AG04449 (cell line): ENCODE measurements at regions of chr3 and their contacts with region 1.

Region 1: DNA sequence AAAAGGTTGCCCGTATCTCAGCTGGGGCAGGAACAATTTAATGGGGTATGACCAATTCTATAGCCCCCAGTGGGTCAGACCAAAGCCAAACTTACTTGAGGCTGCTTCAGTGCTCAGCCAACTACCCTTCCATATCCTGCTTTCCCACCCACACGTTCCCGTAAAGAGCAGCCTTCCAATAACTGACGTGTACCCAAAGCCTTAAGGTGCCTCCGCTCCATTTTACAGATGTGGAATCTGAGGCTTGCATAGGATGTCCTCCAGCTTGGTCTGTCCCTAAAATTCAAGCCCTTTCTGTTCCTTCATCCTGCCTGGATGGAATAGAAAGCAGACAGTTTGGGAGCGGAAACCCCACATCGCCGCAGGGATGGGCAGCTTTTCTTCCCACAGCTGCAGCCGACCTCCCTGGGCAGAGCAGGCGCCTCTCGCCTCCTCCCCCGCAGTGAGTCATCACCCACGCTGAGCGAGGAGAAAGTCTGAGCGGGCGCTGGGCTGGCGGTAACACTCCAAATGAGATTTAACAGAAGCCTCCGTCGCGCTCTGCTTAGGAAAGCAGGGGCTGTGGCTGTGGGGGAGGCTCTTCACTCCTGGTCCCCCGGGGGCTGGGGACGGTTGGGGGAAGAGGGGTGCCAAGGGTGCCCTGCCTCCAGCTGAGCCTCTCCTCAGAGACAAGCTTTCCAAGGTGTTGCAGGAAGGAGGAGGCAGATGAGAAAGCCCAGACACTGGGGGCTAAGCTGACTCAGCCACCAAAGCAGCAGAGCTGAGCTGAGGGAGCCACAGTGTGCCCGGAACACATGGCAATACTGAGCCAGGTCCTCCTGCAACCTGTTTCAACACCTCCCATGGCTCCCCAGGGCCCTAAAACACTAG is 57.8 kb upstream of the HRH1 start:
- DNase-seq: peak; percentile 61
- H3K4me3 ChIP-seq: peak overlapping the region; percentile 54
- CTCF ChIP-seq: no peak

Region 2: DNA sequence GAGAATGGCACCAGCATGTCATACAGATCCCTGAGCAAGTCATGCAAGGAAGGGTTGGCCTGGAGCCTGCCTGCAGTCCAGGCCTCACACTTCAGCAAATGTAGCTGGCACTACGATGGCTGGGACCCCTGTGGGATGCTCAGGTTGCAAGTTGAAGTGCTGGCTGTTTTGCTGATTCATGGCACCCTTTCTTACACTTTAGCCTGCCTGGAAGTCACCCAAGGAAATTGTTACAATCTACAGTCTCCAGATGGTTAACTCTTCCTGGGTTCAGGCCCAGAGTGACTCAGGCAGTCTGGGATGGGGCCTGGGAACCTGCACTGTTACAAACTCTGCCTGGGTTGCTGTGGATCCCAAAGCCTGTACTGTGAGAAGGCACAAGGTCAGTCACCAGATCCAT is 371.4 kb before region 1 on chr3:
- CTCF ChIA-PET with region 1: no interaction called
- POLR2A ChIA-PET with region 1: no interaction called
- DNase-seq: no peak
- H3K4me3 ChIP-seq: no peak overlapping the region
- CTCF ChIP-seq: no peak

Region 3: GRCh38 chr3:10968401-10968800 is 128.1 kb before region 1 on chr3:
- CTCF ChIA-PET with region 1: no interaction called
- POLR2A ChIA-PET with region 1: no interaction called
- DNase-seq: no peak
- H3K4me3 ChIP-seq: no peak overlapping the region
- CTCF ChIP-seq: no peak

Region 4: DNA sequence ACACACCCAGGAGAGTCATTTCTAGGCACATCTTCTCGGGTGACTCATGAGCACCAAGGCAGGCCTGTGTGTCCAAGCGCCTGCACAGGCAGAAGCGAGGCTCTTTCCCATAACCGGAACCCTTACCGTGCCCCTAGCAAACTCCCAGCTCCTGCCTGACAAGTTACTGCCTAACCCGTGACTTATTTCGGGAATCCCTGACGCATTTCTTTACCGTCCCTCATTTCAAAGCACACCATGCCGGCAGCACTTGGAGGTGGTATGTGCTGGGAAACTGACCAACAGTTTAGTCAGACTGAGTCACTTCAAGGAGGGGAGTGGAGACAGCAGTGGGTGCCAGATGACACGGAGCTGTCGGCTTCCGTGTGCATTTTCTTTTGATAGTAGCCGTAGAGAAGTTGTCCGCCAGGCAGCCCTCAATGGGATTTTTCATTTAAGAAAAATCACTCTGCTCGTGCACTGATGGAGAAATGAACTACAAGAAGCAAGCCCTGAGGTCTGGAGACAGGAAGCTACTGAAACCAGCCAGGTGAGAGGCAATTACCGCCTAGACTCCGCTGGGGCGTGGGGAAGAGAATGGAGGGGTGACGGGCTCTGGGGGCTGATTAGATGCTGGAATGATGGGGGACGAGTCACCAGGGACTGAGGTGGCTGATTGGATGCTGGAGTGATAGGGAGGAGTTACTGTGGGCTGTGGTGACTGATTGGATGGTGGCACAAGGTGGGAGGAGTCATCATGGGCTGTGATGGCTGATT is 40.5 kb after region 1 on chr3:
- CTCF ChIA-PET with region 1: no interaction called
- POLR2A ChIA-PET with region 1: interaction called, 10 read pairs
- DNase-seq: peak; percentile 100
- H3K4me3 ChIP-seq: peak overlapping the region; percentile 61
- CTCF ChIP-seq: no peak